ENCODE measurements at regions of chr16 and their contacts with region 1.

Region 1: DNA sequence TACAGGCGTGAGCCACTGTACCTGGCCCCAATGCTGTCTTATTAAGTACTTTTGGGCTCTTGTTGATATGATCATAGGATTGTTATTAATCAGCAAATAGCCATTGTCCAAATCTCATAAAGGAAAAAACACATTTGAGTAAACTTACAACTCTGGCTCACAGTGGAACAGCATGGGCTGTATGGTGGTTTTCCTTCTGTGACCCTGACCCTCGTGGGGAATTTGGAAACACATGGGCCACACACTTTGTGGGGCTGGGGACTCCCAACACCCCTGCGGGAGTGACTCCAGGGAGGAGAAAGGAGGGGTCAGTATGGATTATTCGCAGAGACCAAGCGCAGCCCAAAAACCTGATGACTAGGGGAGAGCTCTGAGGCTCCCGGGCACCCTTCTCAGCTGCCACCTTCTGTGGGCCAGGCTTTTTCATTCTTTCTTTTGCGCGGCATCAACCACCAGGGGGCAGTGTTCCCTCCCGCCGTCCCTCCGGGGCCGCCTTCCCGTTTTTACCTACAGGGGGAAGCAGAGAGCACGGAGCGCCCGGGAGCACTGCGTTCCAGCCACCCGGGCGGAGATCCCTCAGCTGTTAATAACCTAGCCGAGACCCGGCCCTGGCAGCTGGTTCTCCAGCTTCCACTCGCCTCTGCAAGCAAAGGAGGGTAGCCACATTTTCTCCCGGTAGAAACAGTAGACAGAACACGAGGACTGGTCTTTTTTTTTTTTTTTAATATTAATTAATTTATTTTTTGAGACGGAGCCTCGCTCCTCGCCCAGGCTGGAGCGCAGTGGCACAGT is 9.7 kb downstream of the TSNAXIP1 start:
- DNase-seq: peak; percentile 75 to 95 (median 89)
- ATAC-seq: peak; percentile 99
- H3K4me3 ChIP-seq: no peak overlapping the region
- H3K4me3 Mint-ChIP-seq: peak overlapping the region; percentile 56
- H3K27ac ChIP-seq: no peak overlapping the region
- H3K27ac Mint-ChIP-seq: no peak overlapping the region
- H3K4me1 ChIP-seq: peaks cover 7% of the 10 kb centered on the region
- H3K4me1 Mint-ChIP-seq: peaks cover 7% of the 10 kb centered on the region
- H3K27me3 ChIP-seq: no peaks in the 10 kb centered on the region
- H3K27me3 Mint-ChIP-seq: no peaks in the 10 kb centered on the region
- CTCF ChIP-seq: peak; percentile 100

Region 2: DNA sequence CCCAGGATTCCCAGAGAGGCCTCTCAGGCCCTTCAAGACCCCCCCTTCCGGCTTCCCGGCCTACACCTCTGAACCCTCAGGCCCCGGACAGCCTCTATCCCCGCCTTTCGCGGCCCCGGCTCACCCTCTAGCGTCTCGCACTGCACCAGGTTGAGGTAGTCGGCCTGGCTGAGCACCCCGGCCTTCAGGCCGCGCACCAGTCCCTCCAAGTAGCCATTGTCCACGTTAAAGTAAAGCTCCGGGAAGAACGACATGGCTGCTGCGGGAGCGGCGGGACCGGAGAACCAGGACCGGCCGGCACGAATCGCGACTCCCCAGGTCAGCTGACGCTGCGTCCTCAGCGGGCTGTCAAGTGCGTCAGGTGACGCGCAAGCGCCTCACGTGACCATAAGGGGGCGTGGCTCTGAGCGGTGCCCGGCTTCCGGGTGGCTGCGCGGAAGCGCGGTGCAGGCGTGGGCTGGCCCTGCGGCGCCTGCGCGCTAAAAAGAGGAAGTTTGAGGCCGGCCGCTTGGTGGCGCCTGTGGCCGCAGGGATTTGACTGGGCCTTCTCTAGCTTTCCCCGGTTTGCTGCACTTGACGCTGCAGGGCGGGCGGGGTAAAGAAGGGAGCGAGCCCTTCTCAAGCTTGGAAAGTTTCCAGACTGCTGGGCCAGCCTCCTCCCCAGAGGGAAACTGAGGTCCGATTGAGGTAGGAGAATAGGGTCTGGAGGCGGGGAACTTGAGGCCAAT is 335.4 kb before region 1 on chr16 and contains the start of gene ATP6V0D1:
- CTCF ChIA-PET with region 1: interaction called, 10 read pairs
- POLR2A ChIA-PET with region 1: no interaction called
- intact Hi-C with region 1: no loop called
- DNase-seq: peak; percentile 96 to 100 (median 99)
- ATAC-seq: peak; percentile 87
- H3K4me3 ChIP-seq: peak within 1 kb of the TSS; percentile 100
- H3K4me3 Mint-ChIP-seq: peak within 1 kb of the TSS; percentile 98
- H3K27ac ChIP-seq: peak within 1 kb of the TSS; percentile 98 to 100
- H3K27ac Mint-ChIP-seq: peak within 1 kb of the TSS; percentile 95
- H3K4me1 ChIP-seq: peaks cover 53% of the 10 kb centered on the region
- H3K4me1 Mint-ChIP-seq: peaks cover 54% of the 10 kb centered on the region
- H3K27me3 ChIP-seq: no peaks in the 10 kb centered on the region
- H3K27me3 Mint-ChIP-seq: no peaks in the 10 kb centered on the region
- CTCF ChIP-seq: peak; percentile 81
- total RNA-seq, gene ATP6V0D1: 39.4 to 41.7 TPM

Region 3: GRCh38 chr16:67833418-67834241 is 17.2 kb after region 1 on chr16:
- CTCF ChIA-PET with region 1: interaction called, 44 read pairs
- POLR2A ChIA-PET with region 1: interaction called, 4 read pairs
- intact Hi-C with region 1: no loop called
- DNase-seq: peak; percentile 87 to 95 (median 91)
- ATAC-seq: peak; percentile 99
- H3K4me3 ChIP-seq: peak overlapping the region; percentile 87
- H3K4me3 Mint-ChIP-seq: peak overlapping the region; percentile 93
- H3K27ac ChIP-seq: peak overlapping the region in 1 of 2 donors; percentile 34
- H3K27ac Mint-ChIP-seq: peak overlapping the region; percentile 72
- H3K4me1 ChIP-seq: peaks cover 20% of the 10 kb centered on the region
- H3K4me1 Mint-ChIP-seq: peaks cover 20% of the 10 kb centered on the region
- H3K27me3 ChIP-seq: no peaks in the 10 kb centered on the region
- H3K27me3 Mint-ChIP-seq: no peaks in the 10 kb centered on the region
- CTCF ChIP-seq: no peak

Region 4: GRCh38 chr16:67865316-67865715 is 48.9 kb after region 1 on chr16:
- CTCF ChIA-PET with region 1: interaction called, 21 read pairs
- POLR2A ChIA-PET with region 1: interaction called, 5 read pairs
- intact Hi-C with region 1: loop called in 1 of 2 experiments (anchors 1 kb)
- DNase-seq: peak in 5 of 14 experiments; percentile 19 to 59 (median 33)
- ATAC-seq: peak; percentile 63
- H3K4me3 ChIP-seq: no peak overlapping the region
- H3K4me3 Mint-ChIP-seq: no peak overlapping the region
- H3K27ac ChIP-seq: no peak overlapping the region
- H3K27ac Mint-ChIP-seq: no peak overlapping the region
- H3K4me1 ChIP-seq: no peaks in the 10 kb centered on the region
- H3K4me1 Mint-ChIP-seq: no peaks in the 10 kb centered on the region
- H3K27me3 ChIP-seq: no peaks in the 10 kb centered on the region
- H3K27me3 Mint-ChIP-seq: no peaks in the 10 kb centered on the region
- CTCF ChIP-seq: peak; percentile 21

Region 5: GRCh38 chr16:67892899-67893742 is 76.7 kb after region 1 on chr16 and contains the start of gene PSKH1:
- CTCF ChIA-PET with region 1: interaction called, 10 read pairs
- POLR2A ChIA-PET with region 1: interaction called, 3 read pairs
- intact Hi-C with region 1: no loop called
- DNase-seq: peak; percentile 87 to 98 (median 92)
- ATAC-seq: peak; percentile 98
- H3K4me3 ChIP-seq: peak within 1 kb of the TSS; percentile 83
- H3K4me3 Mint-ChIP-seq: peak within 1 kb of the TSS; percentile 98
- H3K27ac ChIP-seq: peak within 1 kb of the TSS; percentile 82 to 83
- H3K27ac Mint-ChIP-seq: peak within 1 kb of the TSS; percentile 94
- H3K4me1 ChIP-seq: peaks cover 29% of the 10 kb centered on the region
- H3K4me1 Mint-ChIP-seq: peaks cover 37% of the 10 kb centered on the region
- H3K27me3 ChIP-seq: no peaks in the 10 kb centered on the region
- H3K27me3 Mint-ChIP-seq: no peaks in the 10 kb centered on the region
- CTCF ChIP-seq: no peak
- total RNA-seq, gene PSKH1: 11.4 to 13.3 TPM

Region 6: DNA sequence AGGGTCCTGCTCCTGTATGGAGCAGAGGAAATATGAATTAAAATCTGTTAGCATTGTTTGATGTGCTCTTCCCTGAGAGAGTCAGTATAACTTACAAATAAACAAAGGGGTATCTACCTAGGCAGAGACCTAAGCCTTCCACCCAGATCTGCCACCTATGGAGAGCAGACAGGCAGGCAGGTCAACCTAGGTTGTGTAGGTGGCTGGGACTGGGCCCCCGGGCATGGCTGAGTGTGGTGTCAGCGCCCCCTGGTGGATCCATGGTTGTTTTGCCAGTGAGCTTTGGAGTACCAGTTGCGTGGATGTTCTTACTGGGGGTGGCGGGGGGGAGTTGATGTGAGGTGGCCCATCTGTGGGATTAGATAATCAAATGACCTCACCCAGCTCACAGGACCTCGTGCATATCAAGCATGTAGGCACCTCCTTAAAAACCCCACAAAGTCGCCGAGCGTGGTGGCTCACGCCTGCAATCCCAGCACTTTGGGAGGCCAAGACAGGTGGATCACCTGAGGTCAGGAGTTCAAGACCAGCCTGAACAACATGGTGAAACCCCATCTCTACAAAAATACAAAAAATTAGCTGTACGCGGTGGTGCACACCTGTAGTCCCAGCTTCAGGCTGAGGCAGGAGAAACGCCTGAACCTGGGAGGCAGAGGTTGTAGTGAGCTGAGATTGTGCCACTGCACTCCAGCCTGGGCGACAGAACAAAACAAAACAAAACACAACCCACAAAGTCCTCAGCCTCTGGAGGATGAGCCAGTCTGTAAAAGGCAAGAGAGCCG is 224.3 kb after region 1 on chr16:
- CTCF ChIA-PET with region 1: interaction called, 11 read pairs
- POLR2A ChIA-PET with region 1: no interaction called
- intact Hi-C with region 1: loop called (anchors 1 kb)
- DNase-seq: peak; percentile 83 to 96 (median 91)
- ATAC-seq: peak; percentile 98
- H3K4me3 ChIP-seq: no peak overlapping the region
- H3K4me3 Mint-ChIP-seq: no peak overlapping the region
- H3K27ac ChIP-seq: no peak overlapping the region
- H3K27ac Mint-ChIP-seq: peak overlapping the region; percentile 57
- H3K4me1 ChIP-seq: peaks cover 14% of the 10 kb centered on the region
- H3K4me1 Mint-ChIP-seq: peaks cover 11% of the 10 kb centered on the region
- H3K27me3 ChIP-seq: no peaks in the 10 kb centered on the region
- H3K27me3 Mint-ChIP-seq: no peaks in the 10 kb centered on the region
- CTCF ChIP-seq: peak; percentile 82

Region 7: GRCh38 chr16:68229431-68230198 is 413.2 kb after region 1 on chr16:
- CTCF ChIA-PET with region 1: interaction called, 12 read pairs
- POLR2A ChIA-PET with region 1: no interaction called
- intact Hi-C with region 1: loop called in 1 of 2 experiments (anchors 1 kb)
- DNase-seq: peak in 11 of 14 experiments; percentile 28 to 72 (median 46)
- ATAC-seq: peak; percentile 61
- H3K4me3 ChIP-seq: no peak overlapping the region
- H3K4me3 Mint-ChIP-seq: no peak overlapping the region
- H3K27ac ChIP-seq: no peak overlapping the region
- H3K27ac Mint-ChIP-seq: peak overlapping the region; percentile 67
- H3K4me1 ChIP-seq: peaks cover 23% of the 10 kb centered on the region
- H3K4me1 Mint-ChIP-seq: peaks cover 40% of the 10 kb centered on the region
- H3K27me3 ChIP-seq: no peaks in the 10 kb centered on the region
- H3K27me3 Mint-ChIP-seq: no peaks in the 10 kb centered on the region
- CTCF ChIP-seq: peak; percentile 95

Measured in CD4-positive, alpha-beta T cell (primary cell).